Ascending aorta (tissue), 2 donors: ENCODE measurements at regions of chr7 and their contacts with region 1.

Region 1: DNA sequence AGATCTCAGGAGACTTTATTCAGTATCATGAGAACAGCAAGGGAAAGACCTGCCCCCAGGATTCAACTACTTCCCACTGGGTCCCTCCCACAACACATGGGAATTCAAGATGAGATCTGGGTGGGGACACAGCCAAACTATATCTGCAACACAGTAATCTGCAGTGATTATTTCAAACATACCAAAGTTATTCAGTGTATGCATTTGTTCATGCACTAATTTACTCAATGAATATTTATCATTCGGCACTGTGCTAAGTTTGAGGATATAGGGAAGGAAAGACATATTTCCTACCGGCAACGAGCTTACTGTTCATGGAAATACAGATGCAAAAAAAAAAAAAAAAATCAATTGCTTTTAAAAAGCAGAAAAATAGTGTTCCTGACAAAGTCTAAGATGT is 91.6 kb upstream of the IMMP2L start:
- DNase-seq: no peak
- H3K4me3 ChIP-seq: no peak overlapping the region
- H3K27ac ChIP-seq: no peak overlapping the region
- H3K4me1 ChIP-seq: no peaks in the 10 kb centered on the region
- H3K27me3 ChIP-seq: no peaks in the 10 kb centered on the region
- CTCF ChIP-seq: no peak

Region 2: GRCh38 chr7:111486472-111487142 is 167.2 kb before region 1 on chr7:
- intact Hi-C with region 1: no loop called
- DNase-seq: no peak
- H3K4me3 ChIP-seq: no peak overlapping the region
- H3K27ac ChIP-seq: no peak overlapping the region
- H3K4me1 ChIP-seq: no peaks in the 10 kb centered on the region
- H3K27me3 ChIP-seq: no peaks in the 10 kb centered on the region
- CTCF ChIP-seq: peak; percentile 48 to 70 (median 57)

Region 3: DNA sequence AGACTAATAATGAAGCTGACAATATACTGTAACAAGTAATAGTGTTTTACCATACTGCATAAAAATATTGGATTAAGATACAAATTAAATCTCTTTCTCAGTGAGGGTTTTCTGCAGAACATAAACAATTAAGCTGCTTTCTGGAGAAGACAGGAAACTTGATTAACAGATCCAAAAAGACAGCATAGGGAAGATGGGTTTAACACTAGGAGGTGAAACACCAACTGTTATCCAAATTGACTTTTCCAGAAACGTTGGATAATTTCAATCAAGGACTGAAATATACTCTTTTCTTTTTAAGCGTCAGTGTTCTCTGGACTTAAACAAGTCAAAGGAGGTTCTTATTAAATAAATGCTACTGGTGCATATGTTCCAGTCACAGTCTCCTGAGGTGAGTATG is 46.2 kb before region 1 on chr7:
- intact Hi-C with region 1: loop called (anchors 2 kb)
- DNase-seq: no peak
- H3K4me3 ChIP-seq: no peak overlapping the region
- H3K27ac ChIP-seq: no peak overlapping the region
- H3K4me1 ChIP-seq: no peaks in the 10 kb centered on the region
- H3K27me3 ChIP-seq: no peaks in the 10 kb centered on the region
- CTCF ChIP-seq: no peak

Region 4: GRCh38 chr7:111672891-111673290 is 19.0 kb after region 1 on chr7:
- intact Hi-C with region 1: no loop called
- DNase-seq: no peak
- H3K4me3 ChIP-seq: no peak overlapping the region
- H3K27ac ChIP-seq: no peak overlapping the region
- H3K4me1 ChIP-seq: no peaks in the 10 kb centered on the region
- H3K27me3 ChIP-seq: no peaks in the 10 kb centered on the region
- CTCF ChIP-seq: no peak

Region 5: DNA sequence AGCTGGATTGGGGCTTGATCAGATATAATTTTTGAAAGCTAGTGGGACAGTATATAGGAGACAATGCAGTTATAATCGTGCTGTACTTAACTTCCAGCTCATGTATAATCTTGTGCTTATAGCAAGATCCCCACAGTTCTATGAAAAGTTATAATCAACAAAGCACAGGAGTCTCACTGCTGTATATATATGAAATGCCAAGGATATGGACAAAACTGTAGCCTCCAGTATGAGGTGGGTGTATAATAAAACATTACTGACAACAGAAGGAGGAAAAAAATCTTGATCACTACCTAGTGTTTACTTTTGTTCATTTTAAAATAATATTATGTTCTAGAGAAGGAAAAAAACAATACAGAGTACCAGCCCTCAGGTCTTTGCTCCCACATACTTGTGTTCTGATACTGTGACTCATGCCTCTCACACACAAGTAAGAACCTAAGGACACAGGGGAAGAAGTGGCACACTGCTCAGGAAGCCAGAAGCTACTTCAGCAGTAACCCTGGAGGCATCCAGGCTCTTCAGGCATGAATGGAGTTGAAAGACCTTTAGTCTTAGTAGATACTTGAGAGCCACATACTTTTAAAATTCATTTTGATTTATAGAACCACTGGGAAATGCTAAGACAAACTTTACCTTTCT is 174.1 kb after region 1 on chr7:
- intact Hi-C with region 1: no loop called
- DNase-seq: no peak
- H3K4me3 ChIP-seq: no peak overlapping the region
- H3K27ac ChIP-seq: no peak overlapping the region
- H3K4me1 ChIP-seq: no peaks in the 10 kb centered on the region
- H3K27me3 ChIP-seq: no peaks in the 10 kb centered on the region
- CTCF ChIP-seq: no peak

Region 6: GRCh38 chr7:112162142-112163020 is 508.5 kb after region 1 on chr7:
- intact Hi-C with region 1: no loop called
- DNase-seq: no peak
- H3K4me3 ChIP-seq: no peak overlapping the region
- H3K27ac ChIP-seq: no peak overlapping the region
- H3K4me1 ChIP-seq: peaks cover 0 to 7% of the 10 kb centered on the region in 2 donors
- H3K27me3 ChIP-seq: no peaks in the 10 kb centered on the region
- CTCF ChIP-seq: no peak